A673 (cell line): ENCODE measurements at regions of chr5 and their contacts with region 1.

Region 1: DNA sequence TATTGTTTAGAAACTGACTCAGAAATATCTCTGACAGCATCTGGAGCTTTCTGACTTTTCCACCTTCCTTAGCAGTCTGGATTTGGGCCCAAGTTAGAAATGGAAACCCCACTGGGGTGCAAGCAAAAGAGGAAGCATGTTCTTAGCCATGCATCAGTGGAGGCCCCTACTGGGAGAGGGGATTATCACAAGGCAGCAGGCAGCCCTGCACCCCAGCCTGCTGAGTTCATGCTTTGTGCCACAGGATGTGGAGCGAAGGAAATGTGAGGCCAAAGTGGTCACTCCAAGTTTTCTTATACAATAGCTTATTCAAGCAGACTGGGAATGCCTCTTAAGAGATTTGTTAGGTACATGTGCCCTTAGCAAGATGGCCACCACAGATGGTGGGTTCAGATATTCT is 146.4 kb upstream of the TLX3 start:
- DNase-seq: peak; percentile 33
- H3K4me3 ChIP-seq: no peak overlapping the region
- H3K27ac ChIP-seq: no peak overlapping the region
- H3K4me1 ChIP-seq: no peaks in the 10 kb centered on the region
- H3K27me3 ChIP-seq: peaks cover 43% of the 10 kb centered on the region
- CTCF ChIP-seq: peak; percentile 53

Region 2: DNA sequence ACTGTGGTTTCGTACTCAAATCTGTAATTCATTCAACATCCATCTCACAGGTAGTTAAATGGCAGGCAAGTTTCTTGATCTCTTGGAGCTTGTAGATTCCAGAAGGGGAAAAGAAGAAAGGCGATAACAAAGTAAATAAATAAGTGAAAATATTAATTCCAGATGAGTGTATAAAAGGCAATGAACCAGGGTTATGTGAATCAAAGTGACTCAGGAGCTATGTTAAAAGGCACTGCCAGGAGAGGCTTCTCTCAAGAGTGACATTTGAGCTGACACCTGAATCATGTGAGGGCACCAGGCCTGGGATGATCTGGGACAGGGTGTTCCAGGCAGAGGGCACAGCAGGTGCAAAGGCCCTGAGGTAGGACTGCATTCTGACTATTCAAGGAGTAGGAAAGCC is 1480.6 kb before region 1 on chr5:
- CTCF ChIA-PET with region 1: no interaction called
- POLR2A ChIA-PET with region 1: interaction called, 15 read pairs
- intact Hi-C with region 1: no loop called
- DNase-seq: no peak
- H3K4me3 ChIP-seq: no peak overlapping the region
- H3K27ac ChIP-seq: no peak overlapping the region
- H3K4me1 ChIP-seq: no peaks in the 10 kb centered on the region
- H3K27me3 ChIP-seq: no peaks in the 10 kb centered on the region
- CTCF ChIP-seq: no peak

Region 3: GRCh38 chr5:170747851-170748250 is 414.8 kb before region 1 on chr5:
- CTCF ChIA-PET with region 1: interaction called, 4 read pairs
- POLR2A ChIA-PET with region 1: no interaction called
- intact Hi-C with region 1: loop called (anchors 10 kb)
- DNase-seq: no peak
- H3K4me3 ChIP-seq: no peak overlapping the region
- H3K27ac ChIP-seq: no peak overlapping the region
- H3K4me1 ChIP-seq: no peaks in the 10 kb centered on the region
- H3K27me3 ChIP-seq: peaks cover 24% of the 10 kb centered on the region
- CTCF ChIP-seq: peak; percentile 30; the same call in 1 of the 2 replicates

Region 4: GRCh38 chr5:170917113-170917512 is 245.5 kb before region 1 on chr5:
- CTCF ChIA-PET with region 1: no interaction called
- POLR2A ChIA-PET with region 1: no interaction called
- intact Hi-C with region 1: no loop called
- DNase-seq: no peak
- H3K4me3 ChIP-seq: no peak overlapping the region
- H3K27ac ChIP-seq: no peak overlapping the region
- H3K4me1 ChIP-seq: no peaks in the 10 kb centered on the region
- H3K27me3 ChIP-seq: no peaks in the 10 kb centered on the region
- CTCF ChIP-seq: no peak

Region 5: GRCh38 chr5:171700318-171700912 is 537.8 kb after region 1 on chr5:
- CTCF ChIA-PET with region 1: no interaction called
- POLR2A ChIA-PET with region 1: no interaction called
- intact Hi-C with region 1: no loop called
- DNase-seq: no peak
- H3K4me3 ChIP-seq: no peak overlapping the region
- H3K27ac ChIP-seq: no peak overlapping the region
- H3K4me1 ChIP-seq: no peaks in the 10 kb centered on the region
- H3K27me3 ChIP-seq: no peaks in the 10 kb centered on the region
- CTCF ChIP-seq: no peak